ENCODE measurements at regions of chr1 and their contacts with region 1.

Region 1: GRCh38 chr1:203368624-203369451 is 17.9 kb upstream of the FMOD start:
- DNase-seq: peak; percentile 81
- H3K4me3 ChIP-seq: no peak overlapping the region
- H3K27ac ChIP-seq: no peak overlapping the region
- H3K4me1 ChIP-seq: peaks cover 14% of the 10 kb centered on the region
- H3K27me3 ChIP-seq: no peaks in the 10 kb centered on the region
- CTCF ChIP-seq: peak; percentile 53 to 66

Region 2: GRCh38 chr1:203410182-203410933 is 41.5 kb after region 1 on chr1:
- CTCF ChIA-PET with region 1: no interaction called
- dilution Hi-C with region 1: loop called (anchors 5 kb)
- in situ Hi-C with region 1: no loop called
- intact Hi-C with region 1: no loop called
- DNase-seq: no peak
- H3K4me3 ChIP-seq: no peak overlapping the region
- H3K27ac ChIP-seq: no peak overlapping the region
- H3K4me1 ChIP-seq: peaks cover 7% of the 10 kb centered on the region
- H3K27me3 ChIP-seq: no peaks in the 10 kb centered on the region
- CTCF ChIP-seq: no peak

Region 3: GRCh38 chr1:203440771-203441170 is 71.9 kb after region 1 on chr1:
- CTCF ChIA-PET with region 1: interaction called, 5 read pairs
- dilution Hi-C with region 1: no loop called
- in situ Hi-C with region 1: no loop called
- intact Hi-C with region 1: loop called (anchors 1 kb)
- DNase-seq: peak; percentile 30
- H3K4me3 ChIP-seq: no peak overlapping the region
- H3K27ac ChIP-seq: no peak overlapping the region
- H3K4me1 ChIP-seq: no peaks in the 10 kb centered on the region
- H3K27me3 ChIP-seq: peaks cover 2% of the 10 kb centered on the region
- CTCF ChIP-seq: peak; percentile 12 to 58

Region 4: GRCh38 chr1:203797948-203798655 is 429.3 kb after region 1 on chr1:
- CTCF ChIA-PET with region 1: no interaction called
- dilution Hi-C with region 1: no loop called
- in situ Hi-C with region 1: no loop called
- intact Hi-C with region 1: no loop called
- DNase-seq: peak; percentile 67
- H3K4me3 ChIP-seq: no peak overlapping the region
- H3K27ac ChIP-seq: no peak overlapping the region
- H3K4me1 ChIP-seq: peaks cover 25% of the 10 kb centered on the region
- H3K27me3 ChIP-seq: no peaks in the 10 kb centered on the region
- CTCF ChIP-seq: peak; percentile 37 to 48